Activated CD4-positive, alpha-beta T cell treated with anti-CD3 and anti-CD28 coated beads, Interleukin-2, amount 10 ng/mL, durations not matched to agents 24 days and 14 days (primary cell): ENCODE measurements at regions of chr18 and their contacts with region 1.

Region 1: DNA sequence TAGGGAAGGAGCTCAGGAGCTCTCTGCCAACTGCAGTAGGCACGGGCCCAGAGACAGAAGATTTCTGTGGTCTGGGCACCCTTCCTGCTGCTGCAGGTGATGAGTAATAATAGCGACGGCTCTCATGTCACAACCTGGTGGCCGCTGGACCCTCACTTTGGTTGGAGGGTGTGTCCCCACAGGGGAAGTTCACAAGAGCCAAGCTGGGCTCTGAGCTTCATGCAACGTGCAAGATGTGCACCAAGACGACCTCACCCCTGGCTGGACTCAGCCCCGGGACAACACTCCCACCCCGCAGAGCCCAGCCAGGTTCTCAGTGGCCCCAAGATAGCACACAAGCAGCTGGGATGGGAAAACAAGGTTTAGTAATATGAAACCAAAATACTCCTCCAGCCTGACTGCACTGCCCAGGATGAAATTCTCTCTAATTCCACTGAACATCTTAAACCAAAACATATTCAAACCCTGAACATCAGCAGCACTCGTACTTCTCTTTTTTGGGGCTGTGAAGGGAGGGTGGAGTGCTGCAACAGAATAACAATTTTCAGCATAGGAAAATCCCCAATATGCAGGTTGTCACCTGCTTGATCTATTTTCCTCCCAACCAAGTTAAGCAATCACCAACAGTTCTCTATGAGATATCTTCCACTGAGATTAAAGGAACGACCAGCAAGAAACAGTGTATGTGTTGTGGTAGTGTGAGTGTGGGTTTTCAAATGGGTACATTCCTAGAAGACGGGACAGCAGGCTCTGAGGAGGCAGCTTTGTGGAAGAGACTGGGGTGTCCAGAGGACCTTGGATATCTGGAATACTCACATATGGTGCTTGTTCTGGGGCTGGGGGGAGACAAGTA is 26.5 kb downstream of the BCL2 start:
- DNase-seq: no peak
- H3K4me3 Mint-ChIP-seq: peak overlapping the region; percentile 56
- H3K27ac Mint-ChIP-seq: peak overlapping the region; percentile 83
- H3K4me1 Mint-ChIP-seq: peaks cover 62% of the 10 kb centered on the region
- H3K27me3 Mint-ChIP-seq: no peaks in the 10 kb centered on the region

Region 2: DNA sequence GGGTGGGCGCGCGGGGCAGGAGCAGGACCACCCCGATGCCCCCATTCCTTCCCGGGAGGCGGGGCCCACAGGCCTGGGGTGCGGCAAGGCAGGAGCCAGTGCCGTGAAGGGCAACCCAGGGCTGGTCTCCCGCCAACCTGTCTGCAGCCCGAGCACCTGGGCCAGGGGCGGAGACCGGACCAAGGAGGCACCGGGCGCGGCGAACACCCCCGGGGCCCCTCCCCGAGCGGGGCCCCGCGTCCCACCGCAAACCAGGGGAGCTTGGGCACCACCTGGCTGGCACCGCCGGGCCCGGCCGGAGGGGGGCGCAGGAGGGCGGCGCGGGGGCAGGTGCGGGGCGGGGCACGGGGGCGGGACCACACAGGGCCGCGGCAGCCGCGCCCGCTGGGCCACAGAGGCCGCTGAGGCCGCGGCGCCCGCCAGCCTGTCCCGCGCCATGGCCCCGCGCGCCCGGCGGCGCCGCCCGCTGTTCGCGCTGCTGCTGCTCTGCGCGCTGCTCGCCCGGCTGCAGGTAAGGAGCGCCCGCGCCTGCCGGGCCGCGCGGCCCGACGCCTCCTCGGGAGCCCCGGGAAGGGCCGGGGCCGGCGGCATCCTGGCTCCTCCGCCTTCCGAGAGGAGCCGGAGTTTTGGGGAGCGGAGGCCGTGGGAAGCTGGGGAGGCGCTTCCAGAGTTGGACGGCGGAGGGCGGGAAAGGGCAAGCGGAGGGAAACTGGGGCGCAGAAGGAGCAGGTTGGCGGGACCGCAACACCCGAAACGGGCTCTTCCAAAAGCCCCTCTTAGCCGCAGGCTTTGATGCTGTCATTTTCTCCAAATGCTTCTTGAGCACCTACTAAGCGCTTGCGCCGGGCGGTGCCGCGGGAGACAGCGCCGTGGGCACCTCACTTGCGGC is 967.9 kb before region 1 on chr18 and contains the start of gene TNFRSF11A:
- intact Hi-C with region 1: no loop called
- DNase-seq: peak; percentile 91
- H3K4me3 Mint-ChIP-seq: peak within 1 kb of the TSS; percentile 91
- H3K27ac Mint-ChIP-seq: peak within 1 kb of the TSS; percentile 89
- H3K4me1 Mint-ChIP-seq: peaks cover 54% of the 10 kb centered on the region
- H3K27me3 Mint-ChIP-seq: peaks cover 39% of the 10 kb centered on the region
- total RNA-seq, gene TNFRSF11A: 14.0 and 16.4 TPM in 2 replicates

Region 3: GRCh38 chr18:63253428-63254372 is 39.4 kb before region 1 on chr18:
- intact Hi-C with region 1: loop called (anchors 5 kb)
- DNase-seq: no peak
- H3K4me3 Mint-ChIP-seq: peak overlapping the region; percentile 29
- H3K27ac Mint-ChIP-seq: peak overlapping the region; percentile 64
- H3K4me1 Mint-ChIP-seq: peaks cover 68% of the 10 kb centered on the region
- H3K27me3 Mint-ChIP-seq: no peaks in the 10 kb centered on the region

Region 4: DNA sequence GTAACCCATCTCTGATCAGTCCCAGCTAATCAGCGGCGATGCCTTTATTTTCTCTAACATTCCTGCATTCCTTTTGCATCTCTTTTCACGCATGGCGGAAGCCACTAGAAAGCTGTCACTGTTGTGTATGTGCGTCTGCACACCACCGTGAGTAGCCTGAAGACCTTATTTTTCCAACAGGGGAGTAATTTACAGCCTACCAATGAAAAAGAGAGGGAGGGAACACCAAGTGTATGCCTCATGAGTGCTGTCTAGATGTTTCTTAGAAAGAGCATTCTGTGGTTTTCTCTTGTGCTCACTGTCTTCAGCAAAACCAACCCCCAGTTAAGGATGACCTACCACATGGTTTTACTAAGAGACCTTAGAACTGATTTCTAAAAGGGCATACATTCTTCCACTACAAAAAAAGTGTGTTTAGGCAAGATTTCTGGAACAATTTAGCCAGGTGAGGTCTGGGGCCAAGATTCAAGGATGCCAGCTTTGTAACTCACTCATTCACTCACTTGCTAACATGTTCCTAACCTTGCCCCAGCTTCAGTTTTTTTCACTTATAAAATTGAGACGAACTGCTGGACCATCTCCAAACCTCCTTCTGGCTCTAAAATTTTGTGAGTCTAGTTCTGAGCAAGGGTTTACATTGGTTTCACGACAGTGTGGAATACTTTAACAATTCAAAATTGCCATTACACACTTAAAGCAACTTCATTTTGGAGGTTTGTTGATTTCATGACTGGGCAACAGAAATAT is 24.9 kb before region 1 on chr18:
- intact Hi-C with region 1: loop called (anchors 2 kb)
- DNase-seq: peak; percentile 72
- H3K4me3 Mint-ChIP-seq: peak overlapping the region; percentile 41
- H3K27ac Mint-ChIP-seq: peak overlapping the region; percentile 61
- H3K4me1 Mint-ChIP-seq: peaks cover 65% of the 10 kb centered on the region
- H3K27me3 Mint-ChIP-seq: no peaks in the 10 kb centered on the region